ENCODE measurements at regions of chr6 and their contacts with region 1.

Region 1: DNA sequence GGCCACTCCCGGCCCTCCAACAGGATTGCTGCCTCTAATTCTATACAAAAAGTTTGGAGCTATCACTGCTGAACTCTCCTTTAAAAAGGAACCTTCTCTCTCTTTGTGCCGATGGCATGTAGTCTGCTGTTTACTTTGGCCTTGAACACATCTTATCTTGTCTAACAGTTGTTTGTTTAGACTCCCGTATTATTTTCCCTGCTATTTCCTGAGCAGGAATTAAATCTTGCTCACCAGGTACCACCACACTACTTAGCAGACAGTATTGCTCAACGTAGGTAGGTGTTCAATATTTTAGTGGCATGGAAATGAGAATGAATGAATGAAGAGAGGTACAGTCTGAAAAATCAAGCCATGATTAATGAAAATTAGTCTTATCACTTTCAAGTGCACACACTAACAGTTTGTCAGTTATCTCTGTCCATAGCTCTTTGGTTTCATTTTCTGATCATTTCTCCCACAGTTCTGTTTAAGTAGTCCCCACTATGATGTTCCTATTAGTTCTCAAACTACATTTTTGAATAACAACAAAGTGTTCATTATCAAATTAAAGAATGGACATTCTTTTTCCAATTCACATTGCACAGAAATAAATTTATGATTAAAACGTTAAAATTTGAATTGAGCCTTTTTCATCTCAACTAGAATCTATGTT is 6.8 kb upstream of the HEY2 start:
- DNase-seq: no peak
- H3K4me3 ChIP-seq: peak overlapping the region; percentile 24 to 56
- H3K27ac ChIP-seq: peak overlapping the region; percentile 95 to 99
- H3K4me1 ChIP-seq: peaks cover 10 to 12% of the 10 kb centered on the region in 2 donors
- H3K27me3 ChIP-seq: no peaks in the 10 kb centered on the region
- CTCF ChIP-seq: no peak

Region 2: GRCh38 chr6:125699591-125699990 is 43.0 kb before region 1 on chr6:
- intact Hi-C with region 1: loop called (anchors 5 kb)
- DNase-seq: no peak
- H3K4me3 ChIP-seq: no peak overlapping the region
- H3K27ac ChIP-seq: peak overlapping the region; percentile 31 to 41
- H3K4me1 ChIP-seq: peaks cover 0 to 7% of the 10 kb centered on the region in 2 donors
- H3K27me3 ChIP-seq: no peaks in the 10 kb centered on the region
- CTCF ChIP-seq: no peak

Measured in ascending aorta (tissue), 2 donors.